GM13977 (cell line): ENCODE measurements at regions of chr13 and their contacts with region 1.

Region 1: DNA sequence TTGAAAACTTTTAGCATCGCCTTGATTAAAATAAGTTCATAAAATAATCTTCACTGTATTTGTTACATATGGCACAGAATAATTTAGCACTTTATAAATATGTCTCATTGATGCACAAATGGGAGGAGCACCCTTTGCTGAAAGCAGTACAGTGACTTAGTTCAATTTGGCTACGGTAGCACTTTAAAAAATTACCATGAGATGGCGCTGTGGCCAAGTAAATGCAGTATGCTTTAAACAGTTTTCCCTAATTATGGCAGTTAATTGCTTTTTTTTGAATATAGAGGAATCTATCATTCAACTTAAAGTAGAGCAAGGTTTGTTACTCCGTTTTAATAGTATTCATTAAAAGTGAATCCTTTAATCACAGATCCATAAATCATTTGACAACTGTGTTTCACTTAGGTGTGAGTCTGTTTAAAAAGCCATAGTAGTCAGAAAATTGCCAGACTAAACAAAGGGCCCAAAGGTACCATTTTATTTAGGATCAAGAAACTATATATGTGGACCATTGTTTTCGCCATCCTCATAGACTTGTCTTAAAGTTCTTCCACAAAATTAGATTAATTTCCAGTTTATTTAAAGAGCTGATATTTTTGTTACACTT is 34.7 kb upstream of the ESD start:
- DNase-seq: no peak
- CTCF ChIP-seq: peak; percentile 79

Region 2: DNA sequence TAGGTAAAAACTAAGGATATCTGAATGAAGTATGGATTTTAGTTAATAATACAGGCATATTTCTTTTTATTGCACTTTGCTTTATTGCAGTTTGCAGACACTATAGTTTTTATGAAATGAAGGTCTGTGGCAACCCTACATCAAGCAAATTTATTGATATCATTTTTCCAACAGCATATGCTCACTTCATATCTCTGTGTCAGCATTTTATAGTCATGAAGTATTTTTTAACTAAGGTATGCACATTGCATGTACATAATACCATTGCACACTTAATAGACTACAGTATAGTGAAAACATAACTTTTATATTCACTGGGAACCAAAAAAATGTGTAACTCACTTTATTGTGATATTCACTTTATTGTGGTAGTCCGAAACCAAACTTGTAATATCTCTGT is 933.1 kb after region 1 on chr13:
- in situ Hi-C with region 1: loop called (anchors 10 kb)
- DNase-seq: no peak
- CTCF ChIP-seq: no peak